Activated CD4-positive, alpha-beta T cell treated with anti-CD3 and anti-CD28 coated beads for 36 hours (primary cell): ENCODE measurements at regions of chr16 and their contacts with region 1.

Region 1: DNA sequence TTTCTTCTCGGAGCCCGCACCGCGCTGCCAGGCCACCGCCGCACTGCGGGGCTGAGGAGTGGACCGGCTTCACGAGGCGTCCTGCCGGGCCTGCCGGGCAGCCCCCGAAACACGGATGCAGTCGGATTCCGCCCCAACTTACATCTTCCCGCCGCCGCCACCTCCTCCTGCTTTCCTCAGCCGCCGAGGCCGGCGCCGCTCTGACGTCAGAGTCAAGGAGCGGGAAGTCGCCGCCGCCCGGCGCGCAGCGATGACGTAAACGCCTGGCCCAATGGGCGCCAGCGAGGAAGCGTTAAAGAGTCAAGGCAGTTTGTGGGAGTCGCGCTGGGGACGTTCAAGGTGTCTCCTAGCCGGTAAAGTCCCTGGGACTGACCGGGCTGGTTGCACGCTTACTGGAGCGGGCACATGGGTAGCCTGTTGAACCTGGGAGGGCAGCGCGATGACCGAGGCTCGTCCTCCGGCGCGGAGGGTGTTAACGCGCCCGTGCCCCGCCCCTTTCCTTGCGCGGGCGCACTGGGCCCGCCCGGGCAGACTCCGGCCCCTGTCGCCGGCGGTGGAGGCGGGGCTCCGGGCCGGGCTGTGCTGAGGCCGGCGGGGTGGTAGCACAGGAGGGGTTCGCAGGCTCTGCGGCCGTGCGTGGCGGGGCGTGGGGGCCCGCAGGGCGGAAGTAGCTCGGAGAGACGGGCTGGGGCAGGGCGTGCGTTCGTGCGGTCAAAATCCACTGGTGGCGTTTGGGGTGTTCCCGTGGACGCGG is at the start of gene RNPS1:
- DNase-seq: peak; percentile 98
- ATAC-seq: peak; percentile 86
- H3K4me3 Mint-ChIP-seq: peak within 1 kb of the TSS; percentile 92
- H3K27ac Mint-ChIP-seq: peak within 1 kb of the TSS; percentile 96
- H3K4me1 Mint-ChIP-seq: peaks cover 34% of the 10 kb centered on the region
- H3K27me3 Mint-ChIP-seq: no peaks in the 10 kb centered on the region
- total RNA-seq, gene RNPS1: 327 to 445 TPM

Region 2: DNA sequence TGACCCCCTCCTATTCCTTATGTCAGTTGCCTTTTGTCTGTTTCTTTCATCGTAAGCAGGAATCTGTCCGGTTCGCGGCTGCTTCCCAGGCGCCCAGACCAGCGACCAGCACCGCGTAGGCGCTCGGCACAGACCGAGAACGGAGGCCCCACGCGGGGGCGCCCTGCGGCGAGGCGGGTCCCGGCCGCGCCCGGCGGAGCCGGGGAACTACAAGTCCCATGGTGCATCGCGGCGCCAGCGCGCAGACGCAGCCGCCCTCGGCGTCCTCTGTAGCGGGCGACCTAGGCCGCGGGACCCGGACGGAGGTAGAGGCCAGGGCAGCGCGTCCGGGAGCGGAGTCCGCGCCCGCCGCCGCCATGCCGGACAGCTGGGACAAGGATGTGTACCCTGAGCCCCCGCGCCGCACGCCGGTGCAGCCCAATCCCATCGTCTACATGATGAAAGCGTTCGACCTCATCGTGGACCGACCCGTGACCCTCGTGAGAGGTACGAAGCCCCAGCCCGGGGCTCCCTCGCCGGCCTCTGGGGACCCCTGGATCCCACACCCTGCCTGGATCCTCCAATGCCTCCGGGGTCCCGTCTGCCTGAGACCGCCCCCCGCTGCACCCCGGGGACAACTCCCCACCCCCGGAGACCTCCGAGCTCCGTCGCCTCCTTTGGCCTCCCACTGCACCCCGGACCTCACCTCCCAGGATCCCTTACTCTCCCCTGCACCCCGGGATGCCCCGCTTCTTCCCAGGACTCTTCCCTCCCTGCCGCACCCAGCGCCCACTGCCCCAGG is 308.6 kb before region 1 on chr16 and contains the start of gene NDUFB10:
- CTCF ChIA-PET with region 1: no interaction called
- POLR2A ChIA-PET with region 1: no interaction called
- intact Hi-C with region 1: loop called in 1 of 2 experiments (anchors 1 kb)
- DNase-seq: peak; percentile 96
- ATAC-seq: peak; percentile 77
- H3K4me3 Mint-ChIP-seq: peak within 1 kb of the TSS; percentile 96
- H3K27ac Mint-ChIP-seq: peak within 1 kb of the TSS; percentile 95
- H3K4me1 Mint-ChIP-seq: peaks cover 34% of the 10 kb centered on the region
- H3K27me3 Mint-ChIP-seq: no peaks in the 10 kb centered on the region
- total RNA-seq, gene NDUFB10: 113 to 118 TPM

Region 3: GRCh38 chr16:2155091-2156021 is 112.7 kb before region 1 on chr16 and contains the start of gene TRAF7:
- CTCF ChIA-PET with region 1: no interaction called
- POLR2A ChIA-PET with region 1: interaction called, 5 read pairs
- intact Hi-C with region 1: loop called in 1 of 2 experiments (anchors 1 kb)
- DNase-seq: peak; percentile 98
- ATAC-seq: peak; percentile 95
- H3K4me3 Mint-ChIP-seq: peak within 1 kb of the TSS; percentile 89
- H3K27ac Mint-ChIP-seq: peak within 1 kb of the TSS; percentile 94
- H3K4me1 Mint-ChIP-seq: peaks cover 31% of the 10 kb centered on the region
- H3K27me3 Mint-ChIP-seq: no peaks in the 10 kb centered on the region
- total RNA-seq, gene TRAF7: 70.7 to 93.7 TPM

Region 4: GRCh38 chr16:2340564-2341455 is 72.7 kb after region 1 on chr16 and contains the start of gene ABCA3:
- CTCF ChIA-PET with region 1: no interaction called
- POLR2A ChIA-PET with region 1: no interaction called
- intact Hi-C with region 1: loop called (anchors 1 to 2 kb)
- DNase-seq: peak; percentile 97
- ATAC-seq: peak; percentile 92
- H3K4me3 Mint-ChIP-seq: peak within 1 kb of the TSS; percentile 82
- H3K27ac Mint-ChIP-seq: peak within 1 kb of the TSS; percentile 21
- H3K4me1 Mint-ChIP-seq: peaks cover 13% of the 10 kb centered on the region
- H3K27me3 Mint-ChIP-seq: peaks cover 7% of the 10 kb centered on the region
- total RNA-seq, gene ABCA3: 6.0 to 7.2 TPM

Region 5: GRCh38 chr16:2520092-2520783 is 252.1 kb after region 1 on chr16 and contains the start of gene AMDHD2:
- CTCF ChIA-PET with region 1: no interaction called
- POLR2A ChIA-PET with region 1: no interaction called
- intact Hi-C with region 1: loop called in 1 of 2 experiments (anchors 1 kb)
- DNase-seq: peak; percentile 95
- ATAC-seq: peak; percentile 77
- H3K4me3 Mint-ChIP-seq: peak within 1 kb of the TSS; percentile 80
- H3K27ac Mint-ChIP-seq: peak within 1 kb of the TSS; percentile 89
- H3K4me1 Mint-ChIP-seq: peaks cover 52% of the 10 kb centered on the region
- H3K27me3 Mint-ChIP-seq: no peaks in the 10 kb centered on the region
- total RNA-seq, gene AMDHD2: 20.9 to 31.6 TPM

Region 6: GRCh38 chr16:2883027-2883851 is 615.1 kb after region 1 on chr16 and contains the start of gene FLYWCH2:
- CTCF ChIA-PET with region 1: no interaction called
- POLR2A ChIA-PET with region 1: no interaction called
- intact Hi-C with region 1: loop called in 1 of 2 experiments (anchors 1 kb)
- DNase-seq: peak; percentile 99
- ATAC-seq: peak; percentile 84
- H3K4me3 Mint-ChIP-seq: peak within 1 kb of the TSS; percentile 85
- H3K27ac Mint-ChIP-seq: peak within 1 kb of the TSS; percentile 92
- H3K4me1 Mint-ChIP-seq: peaks cover 10% of the 10 kb centered on the region
- H3K27me3 Mint-ChIP-seq: no peaks in the 10 kb centered on the region
- total RNA-seq, gene FLYWCH2: 16.8 to 17.3 TPM